CD8-positive, alpha-beta memory T cell (primary cell): ENCODE measurements at regions of chr4 and their contacts with region 1.

Region 1: DNA sequence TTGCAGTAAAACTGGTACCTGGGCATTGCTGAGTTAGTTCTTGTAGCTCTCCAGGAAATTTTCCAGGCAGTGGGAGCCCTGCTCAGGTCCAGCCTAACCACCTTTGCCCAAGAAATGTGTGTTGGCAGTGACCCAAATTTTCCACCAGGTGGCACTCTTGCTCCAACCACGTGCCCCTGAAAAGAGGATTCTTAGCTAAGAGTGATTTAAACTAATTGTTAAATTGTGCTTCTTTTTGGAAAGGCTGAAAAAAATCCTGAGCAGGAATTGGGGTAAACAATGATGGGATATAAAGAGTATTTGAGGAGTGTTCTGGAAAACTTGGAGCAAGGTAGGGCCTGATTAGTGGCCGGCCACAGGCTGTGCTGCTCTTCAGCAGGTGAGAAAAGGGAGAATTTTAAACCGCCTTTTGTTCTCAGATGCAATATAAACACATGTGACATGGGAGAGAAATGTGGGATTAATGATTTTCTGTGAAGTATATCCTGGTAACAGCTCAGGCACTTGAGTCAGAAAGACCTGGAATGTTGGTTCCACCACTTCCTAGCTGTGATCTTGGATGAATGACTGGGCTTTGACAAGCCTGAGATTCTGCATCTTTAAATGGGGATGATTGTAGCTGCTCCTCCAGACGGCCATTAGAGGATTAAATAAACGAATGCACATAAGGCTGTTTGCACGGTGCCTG is 219.6 kb downstream of the PTTG2 start:
- DNase-seq: peak; percentile 49 to 81 (median 62)
- H3K4me3 ChIP-seq: no peak overlapping the region
- H3K4me3 Mint-ChIP-seq: no peak overlapping the region
- H3K27ac ChIP-seq: no peak overlapping the region
- H3K27ac Mint-ChIP-seq: no peak overlapping the region
- H3K4me1 ChIP-seq: peaks cover 22% of the 10 kb centered on the region
- H3K4me1 Mint-ChIP-seq: peaks cover 29 to 50% (median 46%) of the 10 kb centered on the region in 3 donors
- H3K27me3 ChIP-seq: no peaks in the 10 kb centered on the region
- H3K27me3 Mint-ChIP-seq: peaks cover 0 to 2% of the 10 kb centered on the region in 2 donors

Region 2: GRCh38 chr4:38062088-38062893 is 117.5 kb before region 1 on chr4:
- CTCF ChIA-PET with region 1: interaction called, 14 read pairs
- POLR2A ChIA-PET with region 1: interaction called, 3 read pairs
- DNase-seq: peak; percentile 33 to 70 (median 44)
- H3K4me3 ChIP-seq: no peak overlapping the region
- H3K4me3 Mint-ChIP-seq: peak overlapping the region; percentile 18 to 84 (median 78)
- H3K27ac ChIP-seq: no peak overlapping the region
- H3K27ac Mint-ChIP-seq: peak overlapping the region in 6 of 8 donors; percentile 1 to 78 (median 40)
- H3K4me1 ChIP-seq: no peaks in the 10 kb centered on the region
- H3K4me1 Mint-ChIP-seq: peaks cover 8 to 15% (median 14%) of the 10 kb centered on the region in 3 donors
- H3K27me3 ChIP-seq: no peaks in the 10 kb centered on the region
- H3K27me3 Mint-ChIP-seq: peaks cover 0 to 2% of the 10 kb centered on the region in 2 donors

Region 3: GRCh38 chr4:38310446-38311043 is 130.7 kb after region 1 on chr4:
- CTCF ChIA-PET with region 1: interaction called, 22 read pairs
- POLR2A ChIA-PET with region 1: no interaction called
- DNase-seq: peak; percentile 51 to 87 (median 84)
- H3K4me3 ChIP-seq: peak overlapping the region; percentile 26
- H3K4me3 Mint-ChIP-seq: peak overlapping the region; percentile 54 to 82 (median 77)
- H3K27ac ChIP-seq: no peak overlapping the region
- H3K27ac Mint-ChIP-seq: peak overlapping the region; percentile 80 to 95 (median 90)
- H3K4me1 ChIP-seq: peaks cover 47% of the 10 kb centered on the region
- H3K4me1 Mint-ChIP-seq: peaks cover 52 to 75% (median 67%) of the 10 kb centered on the region in 3 donors
- H3K27me3 ChIP-seq: no peaks in the 10 kb centered on the region
- H3K27me3 Mint-ChIP-seq: no peaks in the 10 kb centered on the region

Region 4: DNA sequence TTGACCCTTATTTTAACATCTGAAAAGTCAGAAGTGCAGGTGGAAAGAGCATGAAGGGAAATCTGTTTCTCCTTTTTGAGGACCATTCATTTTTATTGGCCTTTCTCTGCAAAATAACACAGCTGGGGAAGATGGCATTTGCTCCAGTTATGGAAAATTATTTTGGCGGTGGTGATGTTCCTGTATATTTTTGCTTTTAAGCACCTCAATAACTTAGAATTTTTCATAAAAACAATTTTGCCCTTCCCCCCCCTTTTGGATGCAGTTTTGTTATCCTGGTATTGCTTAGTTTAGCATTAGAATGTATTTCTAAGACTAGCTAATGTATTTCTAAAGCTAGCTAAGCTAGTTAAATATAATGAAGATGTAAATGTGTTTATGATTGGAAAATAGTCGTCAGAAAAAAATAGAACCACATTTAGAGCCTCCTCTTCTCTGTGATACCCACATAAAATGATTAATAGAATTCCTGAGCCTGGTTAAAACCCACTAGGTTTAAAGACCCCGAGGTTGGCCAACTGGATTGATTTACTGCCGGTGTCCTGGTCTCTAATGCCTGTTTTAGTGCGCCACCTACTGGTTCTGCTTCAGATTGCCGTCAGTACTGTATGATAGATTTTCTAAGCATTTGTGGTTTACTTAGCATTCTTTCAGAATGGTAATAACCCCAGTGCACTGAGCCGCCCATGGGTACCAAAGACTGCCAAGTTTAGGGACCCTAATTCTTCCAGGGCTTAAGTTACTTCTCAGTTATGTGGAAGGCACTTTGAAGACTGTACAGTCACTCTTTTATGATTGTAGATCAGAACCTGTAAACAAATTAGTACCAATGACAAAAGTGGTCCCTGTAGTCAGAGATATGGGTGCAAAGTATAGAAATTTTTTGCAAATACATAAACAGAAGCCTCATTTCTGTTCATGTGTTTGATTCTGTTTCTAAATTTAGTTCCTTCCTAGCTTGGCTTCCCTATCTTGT is 495.6 kb after region 1 on chr4:
- CTCF ChIA-PET with region 1: interaction called, 56 read pairs
- POLR2A ChIA-PET with region 1: no interaction called
- DNase-seq: peak; percentile 70 to 85 (median 75)
- H3K4me3 ChIP-seq: peak overlapping the region; percentile 26
- H3K4me3 Mint-ChIP-seq: peak overlapping the region; percentile 15 to 88 (median 71)
- H3K27ac ChIP-seq: no peak overlapping the region
- H3K27ac Mint-ChIP-seq: peak overlapping the region; percentile 65 to 95 (median 91)
- H3K4me1 ChIP-seq: peaks cover 88% of the 10 kb centered on the region
- H3K4me1 Mint-ChIP-seq: peaks cover 87 to 95% (median 92%) of the 10 kb centered on the region in 3 donors
- H3K27me3 ChIP-seq: no peaks in the 10 kb centered on the region
- H3K27me3 Mint-ChIP-seq: peaks cover 0 to 4% of the 10 kb centered on the region in 2 donors

Region 5: GRCh38 chr4:38723726-38724474 is 544.1 kb after region 1 on chr4:
- CTCF ChIA-PET with region 1: interaction called, 170 read pairs
- POLR2A ChIA-PET with region 1: no interaction called
- DNase-seq: no peak
- H3K4me3 ChIP-seq: no peak overlapping the region
- H3K4me3 Mint-ChIP-seq: no peak overlapping the region
- H3K27ac ChIP-seq: no peak overlapping the region
- H3K27ac Mint-ChIP-seq: peak overlapping the region in 1 of 8 donors; percentile 57
- H3K4me1 ChIP-seq: no peaks in the 10 kb centered on the region
- H3K4me1 Mint-ChIP-seq: peaks cover 5 to 18% (median 9%) of the 10 kb centered on the region in 3 donors
- H3K27me3 ChIP-seq: no peaks in the 10 kb centered on the region
- H3K27me3 Mint-ChIP-seq: no peaks in the 10 kb centered on the region

Region 6: GRCh38 chr4:38782452-38783108 is 602.7 kb after region 1 on chr4 and contains the start of gene TLR10:
- CTCF ChIA-PET with region 1: interaction called, 11 read pairs
- POLR2A ChIA-PET with region 1: no interaction called
- DNase-seq: peak in 4 of 5 donors; percentile 11 to 52 (median 32)
- H3K4me3 ChIP-seq: no peak within 1 kb of the TSS
- H3K4me3 Mint-ChIP-seq: peak within 1 kb of the TSS in 1 of 7 donors; percentile 24
- H3K27ac ChIP-seq: no peak within 1 kb of the TSS
- H3K27ac Mint-ChIP-seq: peak within 1 kb of the TSS in 1 of 8 donors; percentile 13
- H3K4me1 ChIP-seq: peaks cover 6% of the 10 kb centered on the region
- H3K4me1 Mint-ChIP-seq: peaks cover 3 to 6% (median 4%) of the 10 kb centered on the region in 3 donors
- H3K27me3 ChIP-seq: no peaks in the 10 kb centered on the region
- H3K27me3 Mint-ChIP-seq: peaks cover 2 to 8% of the 10 kb centered on the region in 2 donors
- total RNA-seq, gene TLR10: not detected